ENCODE measurements at regions of chr2 and their contacts with region 1.

Region 1: GRCh38 chr2:143284087-143284675 is 155.0 kb downstream of the ARHGAP15 start:
- DNase-seq: no peak
- ATAC-seq: peak; percentile 88
- H3K4me3 ChIP-seq: no peak overlapping the region
- H3K27ac ChIP-seq: no peak overlapping the region
- H3K4me1 ChIP-seq: no peaks in the 10 kb centered on the region
- H3K27me3 ChIP-seq: no peaks in the 10 kb centered on the region
- CTCF ChIP-seq: peak; percentile 57 to 85 (median 77)
- EP300 ChIP-seq: no peak
- POLR2A ChIP-seq: no peak
- RAD21 ChIP-seq: peak; percentile 35; the same call in 1 of the 2 replicates

Region 2: GRCh38 chr2:143264851-143265250 is 19.3 kb before region 1 on chr2:
- CTCF ChIA-PET with region 1: interaction called, 73 read pairs
- POLR2A ChIA-PET with region 1: interaction called, 6 read pairs
- RAD21 ChIA-PET with region 1: no interaction called
- SMC1A ChIA-PET with region 1: interaction called, 5 read pairs
- in situ Hi-C with region 1: no loop called
- intact Hi-C with region 1: no loop called
- DNase-seq: no peak
- ATAC-seq: no peak
- H3K4me3 ChIP-seq: no peak overlapping the region
- H3K27ac ChIP-seq: no peak overlapping the region
- H3K4me1 ChIP-seq: peaks cover 5% of the 10 kb centered on the region; the same call in 1 of the 2 replicates
- H3K27me3 ChIP-seq: no peaks in the 10 kb centered on the region
- CTCF ChIP-seq: no peak
- EP300 ChIP-seq: no peak
- POLR2A ChIP-seq: no peak
- RAD21 ChIP-seq: no peak

Region 3: GRCh38 chr2:143296089-143296488 is 11.9 kb after region 1 on chr2:
- CTCF ChIA-PET with region 1: interaction called, 11 read pairs
- POLR2A ChIA-PET with region 1: no interaction called
- RAD21 ChIA-PET with region 1: no interaction called
- SMC1A ChIA-PET with region 1: interaction called, 9 read pairs
- in situ Hi-C with region 1: no loop called
- intact Hi-C with region 1: no loop called
- DNase-seq: no peak
- ATAC-seq: peak; percentile 29; the same call in 1 of the 3 replicates
- H3K4me3 ChIP-seq: no peak overlapping the region
- H3K27ac ChIP-seq: no peak overlapping the region
- H3K4me1 ChIP-seq: no peaks in the 10 kb centered on the region
- H3K27me3 ChIP-seq: no peaks in the 10 kb centered on the region
- CTCF ChIP-seq: no peak
- EP300 ChIP-seq: no peak
- POLR2A ChIP-seq: no peak
- RAD21 ChIP-seq: no peak

Region 4: DNA sequence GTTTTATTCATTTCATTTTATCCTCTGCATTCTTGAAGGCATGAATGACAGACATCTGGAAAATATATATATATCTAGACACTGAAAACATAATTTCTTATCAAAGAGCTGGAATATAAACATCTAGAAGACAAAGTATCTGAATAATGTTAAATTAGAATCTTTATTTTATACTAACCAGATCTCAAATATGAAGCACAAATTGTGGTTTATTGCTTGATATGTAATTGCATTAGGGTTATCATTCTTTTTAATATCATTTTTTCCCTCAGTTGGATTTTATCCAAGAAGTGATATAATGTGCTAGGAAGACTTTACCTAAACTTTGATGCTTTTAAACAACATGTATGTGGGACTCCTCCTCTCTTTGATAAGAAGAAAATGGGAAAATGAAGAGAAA is 176.2 kb after region 1 on chr2:
- CTCF ChIA-PET with region 1: no interaction called
- POLR2A ChIA-PET with region 1: no interaction called
- RAD21 ChIA-PET with region 1: no interaction called
- SMC1A ChIA-PET with region 1: no interaction called
- in situ Hi-C with region 1: no loop called
- intact Hi-C with region 1: no loop called
- DNase-seq: no peak
- ATAC-seq: no peak
- H3K4me3 ChIP-seq: no peak overlapping the region
- H3K27ac ChIP-seq: no peak overlapping the region
- H3K4me1 ChIP-seq: no peaks in the 10 kb centered on the region
- H3K27me3 ChIP-seq: no peaks in the 10 kb centered on the region
- CTCF ChIP-seq: no peak
- EP300 ChIP-seq: no peak
- POLR2A ChIP-seq: no peak
- RAD21 ChIP-seq: no peak